Dendritic cell treated with granulocyte-macrophage colony-stimulating factor and Interleukin-4, amounts not matched to agents 40 ng/mL and 50 ng/mL, for 4 days (primary cell): ENCODE measurements at regions of chr1 and their contacts with region 1.

Region 1: GRCh38 chr1:69952691-69953090 is 252.7 kb downstream of the LRRC40 start:
- H3K4me3 Mint-ChIP-seq: no peak overlapping the region
- H3K27ac Mint-ChIP-seq: no peak overlapping the region
- H3K4me1 Mint-ChIP-seq: no peaks in the 10 kb centered on the region
- H3K27me3 Mint-ChIP-seq: no peaks in the 10 kb centered on the region

Region 2: GRCh38 chr1:69898403-69898947 is 54.2 kb before region 1 on chr1:
- intact Hi-C with region 1: loop called (anchors 10 kb)
- H3K4me3 Mint-ChIP-seq: no peak overlapping the region
- H3K27ac Mint-ChIP-seq: no peak overlapping the region
- H3K4me1 Mint-ChIP-seq: peaks cover 10% of the 10 kb centered on the region
- H3K27me3 Mint-ChIP-seq: no peaks in the 10 kb centered on the region

Region 3: DNA sequence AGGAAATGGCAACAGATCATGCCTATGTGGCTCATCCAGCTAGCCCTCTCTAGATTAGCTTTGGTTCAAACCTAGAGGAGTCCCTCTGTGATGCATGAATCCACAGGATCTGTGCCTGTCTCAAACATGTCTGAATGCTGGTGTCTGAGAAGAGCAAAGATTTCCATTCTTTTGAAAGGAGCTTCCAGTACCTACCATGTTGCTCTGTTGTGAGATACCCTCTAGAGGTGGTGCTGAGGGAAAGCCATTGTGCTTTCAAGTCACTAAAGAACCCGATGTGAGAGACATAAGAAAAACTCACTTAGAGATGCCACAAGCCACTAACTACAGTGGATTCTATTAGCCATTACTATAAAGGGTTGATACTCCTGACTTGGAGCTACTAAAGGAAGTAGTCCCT is 149.1 kb after region 1 on chr1:
- intact Hi-C with region 1: no loop called
- H3K4me3 Mint-ChIP-seq: no peak overlapping the region
- H3K27ac Mint-ChIP-seq: no peak overlapping the region
- H3K4me1 Mint-ChIP-seq: no peaks in the 10 kb centered on the region
- H3K27me3 Mint-ChIP-seq: no peaks in the 10 kb centered on the region